Aorta (tissue), 5 donors: ENCODE measurements at regions of chr5 and their contacts with region 1.

Region 1: DNA sequence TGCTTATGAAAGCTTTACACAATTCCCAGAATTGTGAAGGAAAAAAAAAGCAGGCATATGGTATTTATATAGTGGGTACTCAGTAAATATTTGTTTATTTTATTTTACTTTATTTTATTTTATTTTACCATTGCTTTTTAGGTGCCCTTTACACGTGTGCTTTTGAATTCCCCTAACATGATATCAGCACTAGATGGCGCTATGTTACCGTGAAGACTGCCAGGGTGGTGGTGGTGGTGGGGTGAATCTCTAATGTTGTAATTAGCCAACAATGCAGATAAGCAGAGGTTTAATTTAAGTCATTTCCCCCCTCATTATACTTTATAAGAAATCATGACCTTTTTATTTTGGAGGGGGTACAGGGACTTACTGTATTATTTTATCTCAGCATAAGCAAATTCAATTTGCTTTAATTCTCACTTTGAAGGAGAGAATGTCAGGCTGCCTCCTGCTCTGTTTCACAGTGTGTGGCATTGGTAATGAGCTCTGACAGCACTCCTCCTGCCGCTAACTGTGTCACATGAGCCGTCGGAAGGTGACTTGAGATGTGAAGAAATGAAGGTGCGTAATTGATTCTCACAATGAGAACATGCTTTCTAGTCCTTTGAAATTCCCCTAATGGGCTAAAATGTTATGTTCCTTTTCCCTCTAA is 165.6 kb downstream of the YTHDC2 start:
- DNase-seq: no peak
- ATAC-seq: no peak
- H3K4me3 ChIP-seq: no peak overlapping the region
- H3K27ac ChIP-seq: no peak overlapping the region
- H3K4me1 ChIP-seq: no peaks in the 10 kb centered on the region
- H3K27me3 ChIP-seq: no peaks in the 10 kb centered on the region

Region 2: DNA sequence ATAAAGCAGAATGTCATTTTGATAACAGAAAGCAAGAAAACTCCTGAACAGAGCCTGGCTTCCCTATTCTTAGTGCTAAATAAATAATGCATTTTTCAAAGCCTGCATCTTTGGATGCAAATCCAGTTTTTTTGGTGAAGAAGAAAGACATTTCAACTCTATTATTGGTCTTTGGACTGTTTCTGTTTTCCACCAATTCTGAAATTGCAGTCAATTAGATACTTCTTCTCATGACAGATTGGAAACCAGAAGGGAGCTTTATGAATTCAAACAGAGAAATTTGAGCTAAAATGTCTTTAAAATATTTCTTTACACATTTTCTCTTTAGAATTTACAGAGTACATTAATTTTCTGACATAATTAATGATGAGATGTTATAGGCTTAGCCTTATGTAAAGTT is 24.2 kb after region 1 on chr5:
- intact Hi-C with region 1: no loop called
- DNase-seq: no peak
- ATAC-seq: no peak
- H3K4me3 ChIP-seq: no peak overlapping the region
- H3K27ac ChIP-seq: no peak overlapping the region
- H3K4me1 ChIP-seq: no peaks in the 10 kb centered on the region
- H3K27me3 ChIP-seq: no peaks in the 10 kb centered on the region

Region 3: DNA sequence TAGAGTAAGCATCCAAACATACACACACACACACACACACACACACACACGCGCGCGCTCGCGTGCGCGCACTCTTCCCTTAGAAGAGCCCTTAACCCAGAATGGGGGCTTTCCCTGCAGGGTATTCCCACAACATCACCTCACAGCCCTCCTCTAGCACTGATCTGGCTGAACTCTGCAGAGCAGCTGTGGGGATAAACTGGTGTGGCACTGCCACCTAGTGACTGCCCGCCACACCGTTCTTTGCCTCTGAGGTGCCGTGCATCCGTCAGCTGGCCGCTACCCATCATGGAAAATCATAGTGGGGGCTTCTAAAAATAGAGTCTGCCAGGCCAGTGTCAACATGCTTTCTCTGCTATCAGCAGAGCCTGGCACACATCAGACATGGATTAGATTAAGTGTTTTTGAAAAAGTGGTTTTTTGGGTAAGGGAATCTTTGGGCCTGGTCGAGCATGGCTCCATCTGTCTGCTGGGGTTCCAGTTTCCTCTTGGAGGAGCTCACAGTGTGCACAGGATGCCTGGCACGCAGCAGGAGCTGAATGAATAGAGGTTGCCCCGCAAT is 770.9 kb after region 1 on chr5:
- intact Hi-C with region 1: loop called (anchors 2 to 5 kb)
- DNase-seq: peak; percentile 65 to 89
- ATAC-seq: peak; percentile 91
- H3K4me3 ChIP-seq: no peak overlapping the region
- H3K27ac ChIP-seq: no peak overlapping the region
- H3K4me1 ChIP-seq: no peaks in the 10 kb centered on the region
- H3K27me3 ChIP-seq: no peaks in the 10 kb centered on the region